Calu3 (cell line): ENCODE measurements at regions of chr14 and their contacts with region 1.

Region 1: DNA sequence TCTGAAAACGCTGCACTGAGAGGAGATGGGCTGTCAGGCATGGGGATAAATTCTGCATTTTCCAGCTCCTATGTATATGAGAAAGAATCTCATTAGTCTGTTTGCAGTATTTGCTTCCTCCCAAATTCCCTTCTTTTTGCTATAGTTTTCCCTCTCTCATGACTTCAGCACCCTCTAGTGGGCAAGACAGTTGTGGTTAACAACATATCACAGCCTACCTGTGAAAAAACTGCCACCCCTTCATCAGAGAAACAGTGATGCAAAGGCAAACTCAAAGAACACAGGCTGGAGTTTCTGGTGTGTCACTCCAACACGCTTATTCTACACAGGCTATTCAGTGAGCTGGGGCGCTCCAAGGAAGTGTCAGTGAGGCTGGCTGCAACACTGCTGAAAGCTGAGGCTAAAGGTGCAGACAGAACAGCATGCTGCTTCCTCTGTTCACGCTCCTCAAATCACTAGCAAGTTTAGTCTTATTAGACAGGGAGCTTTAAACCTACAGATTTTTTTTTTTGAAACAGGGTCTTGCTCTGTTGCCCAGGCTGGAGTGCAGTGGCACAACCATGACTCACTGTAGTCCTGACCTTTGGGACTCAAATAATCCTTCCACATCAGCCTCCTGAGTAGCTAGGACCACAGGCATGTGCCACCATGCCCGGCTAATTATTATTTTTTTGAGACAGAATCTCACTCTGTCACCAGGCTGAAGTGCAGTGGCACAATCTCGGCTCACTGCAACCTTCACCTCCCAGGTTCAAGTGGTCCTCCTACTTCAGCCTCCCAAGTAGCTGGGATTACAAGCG is 19.3 kb downstream of the ZC2HC1C start:
- DNase-seq: peak; percentile 64
- H3K4me3 Mint-ChIP-seq: no peak overlapping the region
- H3K27ac Mint-ChIP-seq: no peak overlapping the region
- H3K4me1 Mint-ChIP-seq: no peaks in the 10 kb centered on the region
- H3K27me3 Mint-ChIP-seq: no peaks in the 10 kb centered on the region
- CTCF ChIP-seq: peak; percentile 68

Region 2: DNA sequence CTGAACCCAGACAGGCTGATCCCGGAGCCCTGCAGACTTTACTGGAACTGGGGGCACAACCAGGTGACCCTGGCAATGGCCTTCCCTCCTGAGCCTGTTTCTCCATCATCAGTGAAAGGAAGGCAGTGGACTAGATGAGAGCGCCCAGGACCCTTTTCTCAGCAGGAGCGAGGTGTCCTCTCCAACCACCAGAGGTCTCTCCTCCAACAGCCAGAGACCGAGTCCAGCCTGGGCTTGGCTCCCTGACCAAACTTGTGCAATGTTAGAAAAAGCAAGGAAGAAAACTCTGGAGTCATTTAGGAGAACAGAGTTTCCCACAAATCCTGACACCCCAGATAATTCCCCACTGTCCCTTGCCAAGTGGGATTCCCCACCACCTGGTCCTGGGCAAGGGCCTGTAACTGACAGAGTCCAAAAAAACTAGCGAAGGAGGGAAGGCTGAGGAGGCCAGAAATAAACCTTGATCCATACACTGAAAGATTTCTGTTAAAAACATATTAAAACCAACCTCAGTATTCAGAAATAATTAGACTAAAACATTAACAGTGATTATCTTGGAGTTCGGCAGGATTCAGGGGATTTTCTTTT is 174.7 kb before region 1 on chr14:
- CTCF ChIA-PET with region 1: interaction called, 3 read pairs
- intact Hi-C with region 1: loop called (anchors 1 kb)
- DNase-seq: peak; percentile 62
- H3K4me3 Mint-ChIP-seq: no peak overlapping the region
- H3K27ac Mint-ChIP-seq: no peak overlapping the region
- H3K4me1 Mint-ChIP-seq: peaks cover 14% of the 10 kb centered on the region
- H3K27me3 Mint-ChIP-seq: no peaks in the 10 kb centered on the region
- CTCF ChIP-seq: peak; percentile 61

Region 3: GRCh38 chr14:74945823-74946682 is 142.7 kb before region 1 on chr14:
- CTCF ChIA-PET with region 1: interaction called, 8 read pairs
- intact Hi-C with region 1: loop called (anchors 2 kb)
- DNase-seq: peak; percentile 86
- H3K4me3 Mint-ChIP-seq: no peak overlapping the region
- H3K27ac Mint-ChIP-seq: no peak overlapping the region
- H3K4me1 Mint-ChIP-seq: peaks cover 12% of the 10 kb centered on the region
- H3K27me3 Mint-ChIP-seq: no peaks in the 10 kb centered on the region
- CTCF ChIP-seq: peak; percentile 85

Region 4: DNA sequence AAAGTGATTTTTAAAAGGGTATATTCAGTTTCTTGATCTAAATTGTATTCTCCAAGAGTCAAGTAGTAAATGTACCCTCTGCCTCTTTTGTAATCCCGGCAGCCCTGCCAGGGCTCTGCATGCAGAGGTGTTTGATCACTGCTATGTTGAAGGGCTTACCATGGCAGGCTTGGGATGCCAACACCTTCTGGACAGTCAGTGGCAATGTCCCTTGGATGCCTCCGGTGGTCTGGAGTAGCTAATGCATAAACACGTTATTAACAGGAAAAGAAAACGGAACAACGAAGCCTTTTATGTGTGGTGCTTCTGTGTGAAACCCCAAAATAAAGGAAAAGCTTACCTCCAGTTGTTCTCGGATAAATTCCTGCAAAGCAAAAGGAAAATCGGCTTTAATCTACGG is 66.1 kb before region 1 on chr14:
- CTCF ChIA-PET with region 1: no interaction called
- intact Hi-C with region 1: loop called (anchors 10 kb)
- DNase-seq: peak; percentile 32
- H3K4me3 Mint-ChIP-seq: no peak overlapping the region
- H3K27ac Mint-ChIP-seq: no peak overlapping the region
- H3K4me1 Mint-ChIP-seq: peaks cover 14% of the 10 kb centered on the region
- H3K27me3 Mint-ChIP-seq: no peaks in the 10 kb centered on the region
- CTCF ChIP-seq: no peak